RWPE1 (cell line): ENCODE measurements at regions of chr11 and their contacts with region 1.

Region 1: DNA sequence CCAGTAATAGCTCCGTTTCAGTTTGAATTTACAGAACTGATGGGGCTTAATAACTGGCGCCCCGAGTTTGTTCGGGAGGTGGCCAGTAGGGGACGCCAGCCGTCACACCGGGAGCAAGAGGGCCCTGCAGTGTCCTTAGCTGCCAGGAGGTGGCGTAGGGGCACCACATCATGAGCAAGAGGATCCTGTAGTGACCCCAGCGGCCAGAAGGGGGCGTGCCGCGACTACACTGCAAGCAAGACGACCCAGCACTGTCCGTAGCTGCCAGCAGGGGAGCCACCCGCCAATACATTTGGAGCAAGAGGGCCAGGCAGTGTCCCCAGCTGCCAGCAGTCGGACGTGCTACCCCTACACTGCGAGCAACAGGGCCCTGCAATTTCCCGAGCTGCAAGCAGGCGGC is 663.7 kb upstream of the B3GAT1 start:
- DNase-seq: no peak
- H3K27ac ChIP-seq: no peak overlapping the region
- CTCF ChIP-seq: peak; percentile 35

Region 2: DNA sequence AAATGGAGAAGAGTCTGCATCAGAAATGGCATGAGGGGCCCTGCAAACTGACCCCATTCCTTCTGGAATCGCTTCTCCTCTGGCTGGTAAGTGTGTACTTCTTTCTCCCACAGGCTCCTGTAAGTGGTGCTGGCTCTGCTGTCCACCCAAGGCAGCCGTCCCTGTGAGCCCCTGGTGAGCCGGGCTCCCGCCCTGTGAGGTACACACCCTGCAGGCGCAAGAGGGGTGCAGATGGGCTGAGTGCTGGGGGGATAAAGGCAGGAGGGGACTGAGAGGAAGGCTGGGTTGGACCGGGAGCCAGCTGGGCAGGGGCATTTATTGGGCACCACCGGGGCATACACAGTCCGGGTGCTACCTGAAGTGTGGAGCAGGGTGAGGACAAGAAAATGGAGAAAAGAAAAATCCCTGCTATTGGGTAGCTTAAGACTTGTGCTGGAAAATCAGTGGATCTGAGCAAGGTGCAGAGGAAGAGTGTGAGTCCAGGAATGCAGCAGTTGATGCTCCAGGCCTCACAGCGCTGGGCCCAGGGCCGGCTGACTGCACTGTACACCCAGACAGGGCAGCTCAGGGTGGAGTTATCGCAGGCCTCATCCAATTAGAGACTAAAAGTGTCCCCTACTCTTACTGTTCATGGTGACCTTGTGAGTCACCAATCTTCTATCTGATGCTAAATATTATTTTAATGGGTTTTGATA is 208.6 kb before region 1 on chr11:
- CTCF ChIA-PET with region 1: interaction called, 12 read pairs
- POLR2A ChIA-PET with region 1: no interaction called
- DNase-seq: no peak
- H3K27ac ChIP-seq: no peak overlapping the region
- CTCF ChIP-seq: no peak

Region 3: GRCh38 chr11:134957540-134958335 is 118.0 kb before region 1 on chr11:
- CTCF ChIA-PET with region 1: no interaction called
- POLR2A ChIA-PET with region 1: no interaction called
- DNase-seq: no peak
- H3K27ac ChIP-seq: no peak overlapping the region
- CTCF ChIP-seq: no peak